ENCODE measurements at regions of chr2 and their contacts with region 1.

Region 1: DNA sequence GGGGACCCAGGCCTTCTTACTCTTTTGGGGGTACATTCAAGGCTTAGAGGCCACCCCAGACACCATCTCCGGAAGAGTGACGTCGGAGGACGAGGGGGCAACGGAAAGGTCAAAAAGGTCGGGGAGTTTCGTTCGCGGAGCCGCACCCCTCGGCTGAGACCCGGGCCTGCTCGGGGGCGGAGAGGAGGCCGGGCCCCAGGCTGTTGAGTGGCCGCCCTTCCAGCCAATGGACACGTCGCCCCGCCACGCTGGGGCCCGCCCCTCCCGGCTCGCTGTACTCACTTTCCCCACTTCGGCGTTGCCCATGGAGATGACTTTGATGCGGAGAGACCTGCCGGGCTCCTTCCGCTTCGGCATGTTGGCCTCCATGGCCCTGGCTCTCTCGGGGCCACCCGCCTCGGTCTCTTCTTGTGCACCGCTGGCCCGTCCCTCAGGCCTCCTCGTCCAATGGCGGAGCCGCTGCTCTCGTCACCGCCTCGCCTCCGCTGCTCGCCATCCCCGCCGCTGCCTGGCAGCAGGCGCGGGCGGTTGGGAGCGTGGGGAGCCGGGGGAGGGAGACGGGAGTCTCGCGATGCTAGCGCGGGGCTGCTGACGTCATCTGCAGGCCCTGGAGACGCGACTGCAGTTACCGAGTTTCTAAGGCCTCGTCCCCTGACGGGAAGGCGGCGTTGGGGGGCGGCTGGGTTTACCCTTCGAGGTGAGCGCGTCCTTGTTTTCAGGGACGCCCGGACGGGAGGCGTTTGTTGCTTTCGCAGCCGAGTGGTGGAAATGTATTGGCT is at the start of gene DNAJC27:
- DNase-seq: peak; percentile 98
- H3K4me3 Mint-ChIP-seq: peak within 1 kb of the TSS; percentile 99
- H3K27ac Mint-ChIP-seq: peak within 1 kb of the TSS; percentile 100
- H3K4me1 Mint-ChIP-seq: peaks cover 20% of the 10 kb centered on the region
- H3K27me3 Mint-ChIP-seq: no peaks in the 10 kb centered on the region
- total RNA-seq, gene DNAJC27: 5.3 to 6.0 TPM

Region 2: DNA sequence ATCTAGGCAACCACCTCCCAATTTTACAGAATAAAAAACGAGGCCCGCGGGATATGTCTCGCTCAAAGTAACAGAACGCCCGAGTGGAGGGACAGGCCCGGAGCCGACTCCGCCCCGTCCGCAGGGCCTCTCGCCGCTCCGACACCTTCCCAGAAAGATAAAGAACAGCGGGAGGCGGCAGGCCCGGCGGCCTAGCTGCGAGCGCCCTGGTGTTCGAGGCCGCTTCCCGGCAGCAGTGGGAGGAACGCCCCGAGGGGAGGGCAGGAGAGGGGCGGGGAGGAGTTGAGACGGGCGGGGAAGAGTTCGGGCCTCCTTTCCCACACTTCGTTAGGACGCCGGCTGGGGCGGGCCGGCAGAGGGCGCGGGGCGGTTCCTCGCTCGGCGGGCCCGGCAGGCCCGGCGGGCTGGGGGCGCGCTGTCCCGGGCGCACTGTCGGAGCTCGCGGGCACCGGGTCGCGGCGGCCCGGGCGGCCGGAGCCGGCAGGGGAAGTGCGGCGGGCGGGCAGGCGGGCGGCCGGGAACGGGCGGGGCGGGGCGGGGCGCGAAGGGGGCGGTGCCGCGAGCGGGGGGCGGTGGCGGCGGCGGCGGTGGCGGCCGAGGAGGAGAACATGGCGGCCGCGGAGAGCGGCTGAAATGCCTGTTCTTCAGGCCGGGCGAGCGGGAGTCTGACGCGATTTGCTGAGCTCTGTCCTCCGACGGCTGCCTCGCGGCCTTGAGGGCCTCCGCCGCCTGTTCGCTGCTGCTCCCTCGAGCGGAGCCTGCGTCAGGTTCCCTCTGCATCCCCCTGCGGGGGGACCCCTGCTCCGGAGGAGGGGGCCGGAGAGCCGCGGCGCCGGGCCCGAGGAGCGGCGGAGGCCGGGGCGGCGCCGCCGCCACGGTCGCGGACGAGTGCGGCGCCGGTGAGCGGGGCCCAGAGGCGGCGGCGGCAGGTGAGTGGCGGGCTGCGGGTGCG is 480.8 kb before region 1 on chr2 and contains the start of gene NCOA1:
- CTCF ChIA-PET with region 1: no interaction called
- intact Hi-C with region 1: loop called (anchors 1 kb)
- DNase-seq: peak; percentile 95
- H3K4me3 Mint-ChIP-seq: peak within 1 kb of the TSS; percentile 89
- H3K27ac Mint-ChIP-seq: peak within 1 kb of the TSS; percentile 95
- H3K4me1 Mint-ChIP-seq: peaks cover 47% of the 10 kb centered on the region
- H3K27me3 Mint-ChIP-seq: no peaks in the 10 kb centered on the region
- total RNA-seq, gene NCOA1: 14.0 to 15.4 TPM

Region 3: GRCh38 chr2:24920098-24920808 is 51.5 kb before region 1 on chr2 and contains the start of gene ADCY3:
- CTCF ChIA-PET with region 1: interaction called, 3 read pairs
- intact Hi-C with region 1: loop called (anchors 1 kb)
- DNase-seq: peak; percentile 64
- H3K4me3 Mint-ChIP-seq: peak within 1 kb of the TSS; percentile 95
- H3K27ac Mint-ChIP-seq: peak within 1 kb of the TSS; percentile 86
- H3K4me1 Mint-ChIP-seq: peaks cover 30% of the 10 kb centered on the region
- H3K27me3 Mint-ChIP-seq: no peaks in the 10 kb centered on the region
- total RNA-seq, gene ADCY3: 44.8 to 49.9 TPM

Region 4: DNA sequence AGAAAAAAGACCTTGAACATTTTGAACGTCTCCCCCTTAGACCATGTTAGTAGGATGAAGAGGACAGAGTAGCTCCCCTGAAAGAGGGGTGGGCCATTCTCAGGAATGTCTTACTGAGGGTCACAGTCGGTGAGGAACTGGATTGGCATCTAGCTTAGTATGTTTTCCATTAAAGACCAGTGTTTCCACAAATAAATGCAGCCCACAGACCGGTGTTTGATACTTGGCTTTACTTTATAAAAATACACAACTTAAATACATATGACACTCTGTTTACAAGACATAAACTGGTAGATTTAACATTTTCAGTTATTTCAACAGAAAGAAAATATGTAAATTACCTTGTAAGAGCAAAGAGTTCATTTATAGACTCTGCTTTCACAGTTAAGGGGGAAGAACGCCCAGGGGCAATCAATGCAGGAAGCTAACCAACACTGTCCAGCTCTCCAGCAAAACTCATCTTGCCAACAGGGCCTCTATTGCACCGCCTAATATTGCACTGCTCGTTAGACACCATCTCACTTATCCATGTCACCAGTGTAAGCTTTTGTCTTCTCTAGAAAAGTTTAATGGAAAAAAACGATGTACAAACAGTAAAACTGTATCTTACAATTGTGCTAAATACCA is 28.2 kb before region 1 on chr2:
- CTCF ChIA-PET with region 1: no interaction called
- intact Hi-C with region 1: no loop called
- DNase-seq: no peak
- H3K4me3 Mint-ChIP-seq: no peak overlapping the region
- H3K27ac Mint-ChIP-seq: no peak overlapping the region
- H3K4me1 Mint-ChIP-seq: no peaks in the 10 kb centered on the region
- H3K27me3 Mint-ChIP-seq: no peaks in the 10 kb centered on the region

Region 5: GRCh38 chr2:25131567-25132298 is 160.0 kb after region 1 on chr2:
- CTCF ChIA-PET with region 1: interaction called, 163 read pairs
- intact Hi-C with region 1: loop called (anchors 1 kb)
- DNase-seq: peak; percentile 11
- H3K4me3 Mint-ChIP-seq: peak overlapping the region; percentile 60
- H3K27ac Mint-ChIP-seq: peak overlapping the region; percentile 39
- H3K4me1 Mint-ChIP-seq: peaks cover 10% of the 10 kb centered on the region
- H3K27me3 Mint-ChIP-seq: peaks cover 48% of the 10 kb centered on the region

Region 6: DNA sequence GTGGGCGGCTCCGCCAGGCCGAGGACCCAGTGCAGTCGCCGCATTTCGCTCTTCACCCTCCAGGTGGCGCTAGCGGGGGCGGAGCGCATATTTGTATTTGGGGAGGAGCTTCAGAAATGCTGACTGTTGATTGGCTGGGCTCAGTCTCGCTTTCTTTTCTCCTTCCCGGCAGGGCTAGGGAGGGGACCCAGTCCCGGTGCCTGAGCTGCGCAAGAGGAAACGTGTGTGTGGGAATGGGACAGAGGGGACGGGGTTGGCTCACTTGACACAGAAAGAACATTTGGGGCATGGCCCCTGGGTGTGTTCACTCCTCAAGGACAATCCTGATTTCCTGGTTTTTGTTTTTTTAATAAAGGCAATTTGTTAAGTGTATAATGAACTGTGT is 390.3 kb after region 1 on chr2:
- CTCF ChIA-PET with region 1: no interaction called
- intact Hi-C with region 1: loop called (anchors 2 kb)
- DNase-seq: peak; percentile 98
- H3K4me3 Mint-ChIP-seq: peak overlapping the region; percentile 82
- H3K27ac Mint-ChIP-seq: peak overlapping the region; percentile 94
- H3K4me1 Mint-ChIP-seq: peaks cover 11% of the 10 kb centered on the region
- H3K27me3 Mint-ChIP-seq: no peaks in the 10 kb centered on the region

Region 7: DNA sequence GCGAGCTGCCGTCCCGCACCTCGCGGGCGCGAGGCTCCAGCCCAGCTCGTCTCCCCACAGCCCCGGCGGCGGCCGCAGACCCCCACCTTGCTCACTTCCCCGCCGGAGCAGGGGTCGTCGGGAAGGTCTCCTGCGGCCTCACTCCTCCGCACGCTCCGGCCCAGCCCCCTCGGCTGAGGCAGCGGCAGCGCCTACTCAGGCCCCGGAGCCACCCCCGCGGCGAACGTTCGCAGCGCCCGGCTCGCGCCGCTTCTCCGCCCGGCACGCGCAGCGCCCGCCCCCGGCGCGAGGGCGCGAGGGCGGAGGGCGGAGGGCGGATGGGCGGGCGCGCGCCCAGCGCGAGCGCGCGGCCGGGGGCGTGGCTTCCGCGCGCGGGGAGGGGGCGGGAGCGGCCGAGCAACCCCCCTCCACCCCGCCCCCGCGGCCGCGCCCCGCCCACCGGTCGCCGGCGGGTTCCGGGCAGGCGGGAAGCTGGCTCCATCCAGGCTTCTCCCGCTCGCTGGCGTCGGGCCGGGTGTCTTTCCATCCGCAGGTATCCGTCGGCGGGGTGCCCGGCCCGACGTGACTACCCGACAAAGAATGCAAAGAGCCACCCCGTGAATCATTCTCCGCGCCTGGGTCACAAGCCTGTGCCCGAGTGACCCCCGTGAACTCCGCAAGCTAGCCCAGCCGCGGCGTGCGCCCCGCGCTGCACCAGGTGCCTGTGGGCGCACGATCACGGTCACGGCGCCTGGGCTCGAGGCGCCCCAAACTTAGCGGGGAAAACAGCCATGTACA is 701.8 kb after region 1 on chr2 and contains the start of gene DTNB:
- CTCF ChIA-PET with region 1: no interaction called
- intact Hi-C with region 1: loop called (anchors 5 kb)
- DNase-seq: peak; percentile 82
- H3K4me3 Mint-ChIP-seq: peak within 1 kb of the TSS; percentile 79
- H3K27ac Mint-ChIP-seq: peak within 1 kb of the TSS; percentile 60
- H3K4me1 Mint-ChIP-seq: peaks cover 25% of the 10 kb centered on the region
- H3K27me3 Mint-ChIP-seq: no peaks in the 10 kb centered on the region
- total RNA-seq, gene DTNB: 27.2 to 27.6 TPM